ENCODE measurements at regions of chrX and their contacts with region 1.

Region 1: GRCh38 chrX:108068121-108068520 is 23.2 kb downstream of the PSMD10 start:
- DNase-seq: no peak
- ATAC-seq: no peak
- H3K4me3 Mint-ChIP-seq: no peak overlapping the region
- H3K27ac Mint-ChIP-seq: no peak overlapping the region
- H3K4me1 Mint-ChIP-seq: no peaks in the 10 kb centered on the region
- H3K27me3 Mint-ChIP-seq: peaks cover 4% of the 10 kb centered on the region

Region 2: DNA sequence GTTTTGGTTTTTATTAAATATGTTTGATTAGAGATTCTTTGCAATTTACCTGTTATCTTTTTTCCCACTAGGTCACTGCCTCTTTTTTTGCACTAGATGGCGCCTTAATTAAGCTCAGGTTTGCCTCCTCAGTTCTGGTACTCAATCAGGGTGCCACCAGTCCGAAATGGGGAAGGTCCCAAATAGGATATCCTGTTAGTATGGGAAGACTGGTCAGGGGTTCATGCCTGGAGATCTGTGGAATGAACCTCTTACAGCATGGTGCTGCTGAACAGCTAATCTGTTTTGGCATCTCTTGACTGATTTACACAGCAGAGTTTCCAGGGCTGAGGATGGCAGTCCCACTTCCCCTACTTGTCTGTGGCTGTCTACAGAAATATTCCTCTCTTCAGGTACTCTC is 47.5 kb before region 1 on chrX:
- CTCF ChIA-PET with region 1: interaction called, 15 read pairs
- POLR2A ChIA-PET with region 1: no interaction called
- DNase-seq: peak; percentile 19
- ATAC-seq: no peak
- H3K4me3 Mint-ChIP-seq: no peak overlapping the region
- H3K27ac Mint-ChIP-seq: no peak overlapping the region
- H3K4me1 Mint-ChIP-seq: peaks cover 34% of the 10 kb centered on the region
- H3K27me3 Mint-ChIP-seq: no peaks in the 10 kb centered on the region

Measured in activated CD8-positive, alpha-beta T cell treated with anti-CD3 and anti-CD28 coated beads, Interleukin-2, amount 10 ng/mL, durations not matched to agents 7 days and 5 days (primary cell).